Endothelial cell of umbilical vein (primary cell): ENCODE measurements at regions of chr12 and their contacts with region 1.

Region 1: GRCh38 chr12:52980693-52981423 is 25.4 kb upstream of the EIF4B start:
- DNase-seq: peak; percentile 91
- H3K4me3 ChIP-seq: no peak overlapping the region
- H3K27ac ChIP-seq: no peak overlapping the region
- H3K4me1 ChIP-seq: no peaks in the 10 kb centered on the region
- H3K27me3 ChIP-seq: peaks cover 3 to 4% of the 10 kb centered on the region in 2 experiments
- CTCF ChIP-seq: peak; percentile 92 to 100
- POLR2A ChIP-seq: no peak

Region 2: GRCh38 chr12:52582971-52583456 is 397.8 kb before region 1 on chr12:
- CTCF ChIA-PET with region 1: interaction called, 6 read pairs
- POLR2A ChIA-PET with region 1: no interaction called
- dilution Hi-C with region 1: no loop called
- intact Hi-C with region 1: loop called (anchors 1 kb)
- DNase-seq: peak; percentile 53
- H3K4me3 ChIP-seq: no peak overlapping the region
- H3K27ac ChIP-seq: no peak overlapping the region
- H3K4me1 ChIP-seq: no peaks in the 10 kb centered on the region
- H3K27me3 ChIP-seq: peaks cover 2% of the 10 kb centered on the region in 2 experiments
- CTCF ChIP-seq: peak; percentile 49 to 66
- POLR2A ChIP-seq: no peak

Region 3: GRCh38 chr12:52879394-52880351 is 101.2 kb before region 1 on chr12:
- CTCF ChIA-PET with region 1: interaction called, 921 read pairs
- POLR2A ChIA-PET with region 1: no interaction called
- dilution Hi-C with region 1: loop called (anchors 25 kb)
- intact Hi-C with region 1: loop called (anchors 1 kb)
- DNase-seq: peak; percentile 83
- H3K4me3 ChIP-seq: peak overlapping the region in 1 of 3 experiments; percentile 23
- H3K27ac ChIP-seq: no peak overlapping the region
- H3K4me1 ChIP-seq: peaks cover 2% of the 10 kb centered on the region
- H3K27me3 ChIP-seq: no peaks in the 10 kb centered on the region
- CTCF ChIP-seq: peak; percentile 77 to 99
- POLR2A ChIP-seq: no peak

Region 4: GRCh38 chr12:52903285-52903854 is 77.5 kb before region 1 on chr12:
- CTCF ChIA-PET with region 1: interaction called, 53 read pairs
- POLR2A ChIA-PET with region 1: interaction called, 7 read pairs
- dilution Hi-C with region 1: loop called (anchors 25 kb)
- intact Hi-C with region 1: no loop called
- DNase-seq: peak; percentile 75
- H3K4me3 ChIP-seq: peak overlapping the region in 2 of 3 experiments; percentile 13 to 44
- H3K27ac ChIP-seq: peak overlapping the region; percentile 69
- H3K4me1 ChIP-seq: peaks cover 10% of the 10 kb centered on the region
- H3K27me3 ChIP-seq: no peaks in the 10 kb centered on the region
- CTCF ChIP-seq: no peak
- POLR2A ChIP-seq: no peak

Region 5: DNA sequence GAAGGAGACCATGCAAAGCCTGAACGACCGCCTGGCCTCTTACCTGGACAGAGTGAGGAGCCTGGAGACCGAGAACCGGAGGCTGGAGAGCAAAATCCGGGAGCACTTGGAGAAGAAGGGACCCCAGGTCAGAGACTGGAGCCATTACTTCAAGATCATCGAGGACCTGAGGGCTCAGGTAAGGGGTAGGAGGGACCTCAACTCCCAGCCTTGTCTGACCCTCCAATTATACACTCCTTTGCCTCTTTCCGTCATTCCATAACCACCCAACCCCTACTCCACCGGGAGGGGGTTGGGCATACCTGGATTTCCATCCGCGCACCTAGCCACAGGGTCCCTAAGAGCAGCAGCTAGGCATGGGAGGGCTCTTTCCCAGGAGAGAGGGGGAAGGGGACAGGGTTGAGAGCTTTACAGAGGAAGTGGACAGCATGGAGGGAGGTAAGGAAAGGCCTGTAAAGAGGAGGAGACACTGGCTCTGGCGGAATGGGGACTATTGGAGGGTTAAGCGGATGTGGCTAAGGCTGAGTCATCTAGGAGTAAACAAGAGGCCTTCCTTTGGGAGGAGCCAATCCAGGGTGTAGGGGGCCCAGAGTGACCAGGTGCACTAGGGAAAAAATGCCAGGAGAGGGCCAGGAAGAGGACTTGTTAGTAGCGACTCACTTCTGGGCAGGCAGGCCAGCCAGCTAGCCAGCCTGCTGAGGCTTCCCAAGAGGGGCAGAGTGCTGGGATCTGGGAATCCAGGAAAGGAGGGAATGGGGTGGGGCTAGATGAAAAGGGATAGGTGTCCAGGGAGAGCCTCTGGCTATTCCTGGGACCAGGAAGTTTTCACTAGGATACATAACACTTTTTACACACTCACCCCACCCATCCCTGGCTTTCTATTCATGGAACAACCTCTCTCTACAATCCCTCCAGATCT is 31.2 kb before region 1 on chr12:
- CTCF ChIA-PET with region 1: interaction called, 35 read pairs
- POLR2A ChIA-PET with region 1: no interaction called
- dilution Hi-C with region 1: no loop called
- intact Hi-C with region 1: loop called (anchors 2 kb)
- DNase-seq: peak; percentile 96
- H3K4me3 ChIP-seq: peak overlapping the region; percentile 67 to 93 (median 74)
- H3K27ac ChIP-seq: peak overlapping the region; percentile 91
- H3K4me1 ChIP-seq: peaks cover 37% of the 10 kb centered on the region
- H3K27me3 ChIP-seq: no peaks in the 10 kb centered on the region
- CTCF ChIP-seq: no peak
- POLR2A ChIP-seq: no peak

Region 6: DNA sequence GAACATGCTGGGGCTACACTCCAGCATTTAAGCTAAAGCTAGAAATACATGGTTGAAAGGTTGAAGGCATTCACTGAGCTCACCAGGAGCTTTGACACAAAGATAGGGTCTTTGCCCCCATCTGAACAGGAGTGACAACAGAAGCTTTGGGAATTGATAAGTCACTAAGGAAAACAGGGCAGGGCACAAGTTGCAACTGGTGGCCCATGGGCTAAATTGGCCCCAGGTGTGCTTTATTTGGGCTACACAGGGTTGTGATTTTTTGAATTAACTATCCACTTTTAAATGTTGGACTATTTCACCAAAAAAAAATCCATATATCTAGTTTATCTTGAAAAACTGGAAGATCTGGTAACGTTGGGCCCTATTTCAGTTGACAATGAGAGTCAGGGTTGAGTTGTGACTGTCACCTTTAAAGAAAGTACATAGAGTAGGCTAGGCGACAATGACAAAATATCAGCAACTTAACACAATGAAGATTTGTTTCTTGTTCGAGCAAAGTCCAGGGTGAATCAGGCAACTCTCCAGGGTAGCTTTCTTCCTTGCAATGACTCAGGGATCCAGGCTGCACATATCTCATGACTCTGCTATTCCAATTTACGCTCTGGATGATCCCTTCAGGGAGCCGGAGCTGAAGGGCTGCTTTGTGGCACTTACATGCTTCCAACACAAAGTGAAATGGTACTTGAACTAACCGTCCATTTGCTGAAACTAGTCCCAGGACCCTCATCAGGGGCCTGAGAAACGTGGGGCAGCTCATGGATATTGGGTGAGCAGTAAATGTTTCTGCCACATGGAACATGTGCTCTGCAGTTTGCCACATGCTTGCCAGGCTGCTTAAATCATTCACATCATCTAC is 12.1 kb after region 1 on chr12:
- CTCF ChIA-PET with region 1: interaction called, 13 read pairs
- POLR2A ChIA-PET with region 1: no interaction called
- dilution Hi-C with region 1: no loop called
- intact Hi-C with region 1: no loop called
- DNase-seq: no peak
- H3K4me3 ChIP-seq: no peak overlapping the region
- H3K27ac ChIP-seq: no peak overlapping the region
- H3K4me1 ChIP-seq: no peaks in the 10 kb centered on the region
- H3K27me3 ChIP-seq: peaks cover 0 to 2% of the 10 kb centered on the region in 2 experiments
- CTCF ChIP-seq: no peak
- POLR2A ChIP-seq: no peak